Activated B cell treated with CpG ODN at 0.5 μM for 24 hours (primary cell): ENCODE measurements at regions of chr6 and their contacts with region 1.

Region 1: GRCh38 chr6:8063761-8064637 is at the start of gene BLOC1S5:
- DNase-seq: peak; percentile 96
- ATAC-seq: peak; percentile 90
- H3K4me3 Mint-ChIP-seq: peak within 1 kb of the TSS; percentile 93
- H3K27ac Mint-ChIP-seq: peak within 1 kb of the TSS; percentile 91
- H3K4me1 Mint-ChIP-seq: peaks cover 25% of the 10 kb centered on the region
- H3K27me3 Mint-ChIP-seq: no peaks in the 10 kb centered on the region
- CTCF ChIP-seq: no peak
- total RNA-seq, gene BLOC1S5: 13.8 and 16.8 TPM in 2 replicates

Region 2: DNA sequence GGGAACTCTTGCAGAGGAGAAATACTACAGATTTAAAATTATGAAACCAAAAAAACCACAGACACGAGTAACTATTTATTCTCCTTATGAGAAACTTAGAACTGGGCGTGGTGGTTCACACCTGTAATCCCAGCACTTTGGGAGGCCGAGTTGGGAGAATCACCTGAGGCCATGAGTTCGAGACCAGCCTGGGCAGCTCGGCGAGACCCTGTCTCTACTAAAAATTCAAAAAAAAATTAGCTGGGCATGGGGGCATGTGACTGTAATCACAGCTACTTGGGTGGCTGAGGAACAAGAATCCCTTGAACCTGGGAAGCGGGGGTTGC is 787.8 kb before region 1 on chr6:
- CTCF ChIA-PET with region 1: interaction called, 6 read pairs
- POLR2A ChIA-PET with region 1: no interaction called
- intact Hi-C with region 1: loop called (anchors 2 kb)
- DNase-seq: no peak
- ATAC-seq: no peak
- H3K4me3 Mint-ChIP-seq: peak overlapping the region; percentile 53
- H3K27ac Mint-ChIP-seq: peak overlapping the region; percentile 67
- H3K4me1 Mint-ChIP-seq: peaks cover 36% of the 10 kb centered on the region
- H3K27me3 Mint-ChIP-seq: no peaks in the 10 kb centered on the region
- CTCF ChIP-seq: no peak

Region 3: GRCh38 chr6:7389451-7390225 is 674.4 kb before region 1 on chr6 and contains the starts of genes CAGE1 and RIOK1:
- CTCF ChIA-PET with region 1: no interaction called
- POLR2A ChIA-PET with region 1: interaction called, 14 read pairs
- intact Hi-C with region 1: loop called (anchors 2 kb)
- DNase-seq: peak; percentile 93
- ATAC-seq: peak; percentile 87
- H3K4me3 Mint-ChIP-seq: peak within 1 kb of the TSS; percentile 96
- H3K27ac Mint-ChIP-seq: peak within 1 kb of the TSS; percentile 100
- H3K4me1 Mint-ChIP-seq: peaks cover 34% of the 10 kb centered on the region
- H3K27me3 Mint-ChIP-seq: no peaks in the 10 kb centered on the region
- CTCF ChIP-seq: no peak
- total RNA-seq, gene CAGE1: 0.07 and 0.20 TPM in 2 replicates
- total RNA-seq, gene RIOK1: 38.3 and 38.7 TPM in 2 replicates

Region 4: GRCh38 chr6:7725849-7726415 is 338.1 kb before region 1 on chr6 and contains the start of gene BMP6:
- CTCF ChIA-PET with region 1: interaction called, 59 read pairs
- POLR2A ChIA-PET with region 1: no interaction called
- intact Hi-C with region 1: loop called (anchors 1 kb)
- DNase-seq: peak; percentile 57
- ATAC-seq: peak; percentile 85
- H3K4me3 Mint-ChIP-seq: peak within 1 kb of the TSS; percentile 83
- H3K27ac Mint-ChIP-seq: no peak within 1 kb of the TSS
- H3K4me1 Mint-ChIP-seq: peaks cover 30% of the 10 kb centered on the region
- H3K27me3 Mint-ChIP-seq: peaks cover 53% of the 10 kb centered on the region
- CTCF ChIP-seq: no peak
- total RNA-seq, gene BMP6: 0.75 and 0.78 TPM in 2 replicates

Region 5: DNA sequence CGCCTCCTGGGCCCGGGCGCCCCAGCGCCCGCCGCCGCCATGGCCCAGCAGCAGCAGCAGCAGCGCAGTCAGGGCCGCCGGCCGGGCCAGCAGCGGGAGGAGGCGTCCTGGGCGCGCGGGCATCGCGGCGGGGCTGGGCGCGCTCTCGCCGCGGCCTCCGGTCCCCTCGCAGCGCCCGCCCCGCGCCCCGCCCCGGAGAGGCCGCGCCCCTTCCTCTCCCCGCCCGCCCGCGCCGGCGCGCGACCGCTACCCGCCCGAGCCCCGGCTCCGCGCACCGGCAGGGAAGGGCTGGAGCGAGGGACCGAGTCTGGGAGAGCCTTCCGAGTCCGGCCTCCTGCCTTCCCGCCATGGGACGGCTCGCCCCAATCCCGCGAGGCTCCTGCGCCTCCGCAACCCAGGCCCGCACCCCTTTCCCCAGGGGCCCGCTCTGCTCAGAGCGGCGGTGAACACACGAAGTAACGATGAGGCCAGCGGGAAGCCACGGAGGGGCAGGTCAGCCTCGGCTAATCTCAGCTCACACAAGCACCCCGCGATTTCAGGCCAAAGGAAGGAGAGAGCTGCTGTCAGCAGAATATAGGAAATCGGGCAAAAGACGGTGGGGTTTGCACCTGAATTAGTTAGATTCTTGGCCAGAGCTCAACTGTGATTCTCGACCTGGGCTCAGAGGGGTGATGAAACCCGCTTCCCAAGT is 153.2 kb before region 1 on chr6 and contains the start of gene TXNDC5:
- CTCF ChIA-PET with region 1: no interaction called
- POLR2A ChIA-PET with region 1: interaction called, 3 read pairs
- intact Hi-C with region 1: loop called (anchors 2 kb)
- DNase-seq: peak; percentile 78
- ATAC-seq: peak; percentile 79
- H3K4me3 Mint-ChIP-seq: peak within 1 kb of the TSS; percentile 85
- H3K27ac Mint-ChIP-seq: peak within 1 kb of the TSS; percentile 83
- H3K4me1 Mint-ChIP-seq: peaks cover 26% of the 10 kb centered on the region
- H3K27me3 Mint-ChIP-seq: no peaks in the 10 kb centered on the region
- CTCF ChIP-seq: no peak
- total RNA-seq, gene TXNDC5: 68.2 TPM in 2 replicates

Region 6: GRCh38 chr6:8219352-8219943 is 155.4 kb after region 1 on chr6:
- CTCF ChIA-PET with region 1: interaction called, 3 read pairs
- POLR2A ChIA-PET with region 1: no interaction called
- intact Hi-C with region 1: loop called (anchors 2 kb)
- DNase-seq: no peak
- ATAC-seq: peak; percentile 57
- H3K4me3 Mint-ChIP-seq: no peak overlapping the region
- H3K27ac Mint-ChIP-seq: no peak overlapping the region
- H3K4me1 Mint-ChIP-seq: no peaks in the 10 kb centered on the region
- H3K27me3 Mint-ChIP-seq: peaks cover 5% of the 10 kb centered on the region
- CTCF ChIP-seq: no peak